Ovary (tissue), 10 donors: ENCODE measurements at regions of chr10 and their contacts with region 1.

Region 1: GRCh38 chr10:58513188-58514110 is 777 bp downstream of the BICC1 start:
- DNase-seq: peak; percentile 76 to 84 (median 78)
- H3K4me3 ChIP-seq: peak overlapping the region; percentile 63
- H3K27ac ChIP-seq: peak overlapping the region; percentile 54 to 93
- H3K4me1 ChIP-seq: peaks cover 4% of the 10 kb centered on the region
- H3K27me3 ChIP-seq: no peaks in the 10 kb centered on the region
- CTCF ChIP-seq: no peak
- EP300 ChIP-seq: no peak
- POLR2A ChIP-seq: peak; percentile 58

Region 2: DNA sequence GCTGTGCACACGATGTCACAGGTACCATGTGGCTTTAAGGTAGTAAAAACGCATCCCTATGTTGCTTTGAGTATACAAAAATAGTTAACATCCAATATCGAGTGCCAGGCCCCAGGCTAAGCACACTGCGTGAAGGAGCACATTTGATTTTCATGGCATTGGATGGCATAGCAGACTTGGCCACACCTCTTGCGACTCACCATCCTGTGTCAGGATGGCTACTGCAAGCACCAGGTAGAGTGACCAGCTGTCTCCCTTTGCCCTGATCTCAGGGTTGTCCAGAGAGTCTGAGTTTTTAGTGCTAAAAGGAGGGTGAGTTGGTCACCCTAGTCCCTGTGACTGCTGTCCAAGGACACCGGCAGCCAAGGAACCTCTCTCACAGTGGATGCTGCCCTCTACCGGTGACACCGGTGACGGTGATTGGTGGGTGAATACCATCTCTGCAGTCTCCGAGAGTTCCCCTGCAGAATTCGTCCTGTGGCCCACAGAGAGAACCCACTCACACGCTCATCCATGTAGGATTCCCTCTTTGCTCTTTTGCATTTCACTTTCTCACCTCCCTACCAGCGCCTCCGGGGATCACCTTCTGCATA is 75.3 kb after region 1 on chr10:
- intact Hi-C with region 1: loop called in 1 of 4 experiments (anchors 10 kb)
- DNase-seq: peak in 1 of 5 donors; percentile 36
- H3K4me3 ChIP-seq: no peak overlapping the region
- H3K27ac ChIP-seq: no peak overlapping the region
- H3K4me1 ChIP-seq: peaks cover 11% of the 10 kb centered on the region
- H3K27me3 ChIP-seq: no peaks in the 10 kb centered on the region
- CTCF ChIP-seq: no peak
- EP300 ChIP-seq: no peak
- POLR2A ChIP-seq: no peak

Region 3: GRCh38 chr10:58641095-58641531 is 127.7 kb after region 1 on chr10:
- intact Hi-C with region 1: loop called in 1 of 4 experiments (anchors 2 kb)
- DNase-seq: peak in 2 of 5 donors; percentile 23 to 30
- H3K4me3 ChIP-seq: no peak overlapping the region
- H3K27ac ChIP-seq: peak overlapping the region in 1 of 2 donors; percentile 21
- H3K4me1 ChIP-seq: peaks cover 5% of the 10 kb centered on the region
- H3K27me3 ChIP-seq: no peaks in the 10 kb centered on the region
- CTCF ChIP-seq: no peak
- EP300 ChIP-seq: no peak
- POLR2A ChIP-seq: no peak

Region 4: DNA sequence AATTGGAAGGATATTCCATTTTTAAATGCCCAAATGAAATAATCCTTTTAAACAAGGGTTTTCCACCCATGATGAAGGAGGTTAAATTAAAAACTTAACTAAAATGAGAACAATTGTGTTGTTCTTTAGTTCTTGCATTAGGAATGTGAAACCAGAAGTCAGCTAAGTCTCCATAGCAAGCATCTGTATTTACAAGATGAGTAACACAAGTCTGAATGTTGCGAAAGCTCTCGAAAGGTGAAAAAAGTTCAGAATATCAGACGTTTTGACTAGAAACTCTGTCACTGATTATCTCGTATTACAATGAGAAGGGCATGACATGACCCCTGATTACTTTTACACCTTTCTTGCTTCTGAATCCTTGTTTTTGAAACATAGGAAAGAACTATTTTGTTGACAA is 148.9 kb after region 1 on chr10:
- intact Hi-C with region 1: no loop called
- DNase-seq: no peak
- H3K4me3 ChIP-seq: no peak overlapping the region
- H3K27ac ChIP-seq: no peak overlapping the region
- H3K4me1 ChIP-seq: no peaks in the 10 kb centered on the region
- H3K27me3 ChIP-seq: no peaks in the 10 kb centered on the region
- CTCF ChIP-seq: no peak
- EP300 ChIP-seq: no peak
- POLR2A ChIP-seq: no peak

Region 5: DNA sequence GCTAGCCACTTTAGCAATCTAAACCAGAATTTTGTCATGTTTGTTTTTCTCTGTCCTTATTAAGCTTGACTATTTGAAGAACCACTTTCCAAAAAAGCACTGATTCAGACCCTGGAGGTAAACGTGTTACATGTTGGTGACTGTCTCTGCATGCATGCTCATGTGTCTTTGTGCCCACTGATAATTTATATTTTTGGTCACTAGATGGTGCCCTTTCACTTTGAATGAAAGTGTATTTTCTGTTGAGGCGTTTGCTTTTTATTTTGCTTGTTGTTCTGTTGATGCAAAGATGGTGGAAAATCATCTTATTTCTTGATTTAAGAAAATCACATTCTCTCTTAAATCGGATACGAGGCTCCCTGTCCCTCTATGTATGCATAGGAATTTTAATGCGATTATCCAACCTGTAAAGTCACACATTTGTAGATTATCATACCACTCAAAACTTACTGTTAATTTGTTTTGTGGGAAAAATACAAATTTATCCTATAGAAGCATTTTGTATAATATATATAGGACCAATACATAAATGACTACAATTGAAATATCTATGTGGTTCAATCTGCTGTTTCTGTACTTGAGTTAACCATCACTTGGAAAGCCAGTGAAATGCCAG is 268.5 kb after region 1 on chr10:
- intact Hi-C with region 1: loop called in 1 of 4 experiments (anchors 10 kb)
- DNase-seq: no peak
- H3K4me3 ChIP-seq: no peak overlapping the region
- H3K27ac ChIP-seq: no peak overlapping the region
- H3K4me1 ChIP-seq: peaks cover 8% of the 10 kb centered on the region
- H3K27me3 ChIP-seq: no peaks in the 10 kb centered on the region
- CTCF ChIP-seq: peak; percentile 25 to 66 (median 61)
- EP300 ChIP-seq: no peak
- POLR2A ChIP-seq: no peak